Heart left ventricle (tissue), 16 donors: ENCODE measurements at regions of chr3 and their contacts with region 1.

Region 1: GRCh38 chr3:13895155-13896105 is 15.6 kb upstream of the WNT7A start:
- DNase-seq: peak; percentile 93 to 97 (median 94)
- ATAC-seq: peak; percentile 99
- H3K4me3 ChIP-seq: peak overlapping the region; percentile 32 to 78 (median 66)
- H3K27ac ChIP-seq: peak overlapping the region in 9 of 12 donors; percentile 22 to 83 (median 66)
- H3K4me1 ChIP-seq: peaks cover 0 to 27% (median 12%) of the 10 kb centered on the region in 12 donors
- H3K27me3 ChIP-seq: no peaks in the 10 kb centered on the region
- CTCF ChIP-seq: no peak
- POLR2A ChIP-seq: peak; percentile 18 to 80

Region 2: DNA sequence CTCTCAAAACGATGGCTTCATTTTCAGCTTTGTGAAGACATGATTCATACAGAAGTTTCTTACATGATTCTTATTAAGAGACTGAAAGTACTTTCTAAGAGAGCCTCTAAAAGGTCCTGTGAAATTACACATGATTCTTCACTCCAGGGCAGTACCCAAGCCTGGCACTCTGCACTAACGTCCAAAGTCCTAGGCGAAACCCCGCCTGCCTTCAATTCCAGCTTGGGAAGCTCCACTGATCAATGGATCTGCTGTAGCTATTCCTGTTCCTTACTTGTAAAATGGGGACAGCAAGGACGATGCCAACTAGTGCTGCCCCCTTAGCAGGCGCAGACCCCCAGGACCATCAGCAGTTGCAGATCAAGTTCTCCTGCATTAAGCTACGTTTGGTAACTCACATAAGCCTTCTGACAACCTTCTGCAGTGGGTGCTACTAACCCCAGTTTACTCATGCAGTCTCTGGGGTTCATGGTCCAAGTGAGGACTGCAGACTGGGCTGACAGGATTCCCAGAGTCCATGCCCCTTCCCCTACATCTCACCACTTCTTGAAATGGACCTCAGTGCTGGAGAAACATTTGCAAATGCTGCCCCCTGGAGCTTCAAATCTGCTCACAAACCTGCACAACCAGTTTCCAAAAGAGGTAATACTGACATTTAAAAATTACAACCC is 218.7 kb after region 1 on chr3:
- intact Hi-C with region 1: loop called in 5 of 10 experiments (anchors 1 to 10 kb)
- DNase-seq: no peak
- ATAC-seq: no peak
- H3K4me3 ChIP-seq: no peak overlapping the region
- H3K27ac ChIP-seq: no peak overlapping the region
- H3K4me1 ChIP-seq: peaks cover 0 to 9% (median 0%) of the 10 kb centered on the region in 12 donors
- H3K27me3 ChIP-seq: no peaks in the 10 kb centered on the region
- CTCF ChIP-seq: peak in 3 of 12 donors; percentile 5 to 30 (median 14)
- POLR2A ChIP-seq: no peak

Region 3: GRCh38 chr3:14178247-14179113 is 283.1 kb after region 1 on chr3 and contains the starts of genes LSM3 and XPC:
- intact Hi-C with region 1: loop called in 6 of 10 experiments (anchors 1 to 10 kb)
- DNase-seq: peak; percentile 96 to 99 (median 97)
- ATAC-seq: peak; percentile 99 to 100 (median 100)
- H3K4me3 ChIP-seq: peak within 1 kb of the TSS; percentile 51 to 92 (median 76)
- H3K27ac ChIP-seq: peak within 1 kb of the TSS; percentile 56 to 98 (median 94)
- H3K4me1 ChIP-seq: peaks cover 0 to 47% (median 32%) of the 10 kb centered on the region in 12 donors
- H3K27me3 ChIP-seq: no peaks in the 10 kb centered on the region
- CTCF ChIP-seq: peak in 1 of 12 donors; percentile 8
- POLR2A ChIP-seq: peak; percentile 68 to 97
- total RNA-seq, gene LSM3: 11.6 to 15.9 (median 13.7) TPM
- total RNA-seq, gene XPC: 7.0 to 20.0 (median 11.1) TPM

Region 4: GRCh38 chr3:14452679-14453367 is 557.4 kb after region 1 on chr3:
- intact Hi-C with region 1: loop called in 1 of 10 experiments (anchors 10 kb)
- DNase-seq: peak; percentile 91 to 95 (median 93)
- ATAC-seq: peak; percentile 86 to 93 (median 88)
- H3K4me3 ChIP-seq: no peak overlapping the region
- H3K27ac ChIP-seq: peak overlapping the region; percentile 5 to 94 (median 80)
- H3K4me1 ChIP-seq: peaks cover 19 to 72% (median 39%) of the 10 kb centered on the region in 12 donors
- H3K27me3 ChIP-seq: peaks cover 0 to 12% (median 0%) of the 10 kb centered on the region in 9 donors
- CTCF ChIP-seq: peak in 5 of 12 donors; percentile 6 to 40 (median 25)
- POLR2A ChIP-seq: no peak

Region 5: GRCh38 chr3:14467814-14468620 is 572.6 kb after region 1 on chr3:
- intact Hi-C with region 1: loop called in 9 of 10 experiments (anchors 5 to 10 kb)
- DNase-seq: peak in 1 of 5 donors; percentile 30
- ATAC-seq: peak in 2 of 4 donors; percentile 48 to 53
- H3K4me3 ChIP-seq: no peak overlapping the region
- H3K27ac ChIP-seq: no peak overlapping the region
- H3K4me1 ChIP-seq: peaks cover 0 to 25% (median 0%) of the 10 kb centered on the region in 12 donors
- H3K27me3 ChIP-seq: peaks cover 0 to 5% (median 0%) of the 10 kb centered on the region in 9 donors
- CTCF ChIP-seq: peak; percentile 77 to 94 (median 89)
- POLR2A ChIP-seq: no peak